CD14-positive monocyte (primary cell): ENCODE measurements at regions of chr7 and their contacts with region 1.

Region 1: GRCh38 chr7:131238347-131238931 is 89.2 kb upstream of the MKLN1 start:
- DNase-seq: peak; percentile 85 to 94 (median 92)
- H3K4me3 ChIP-seq: peak overlapping the region in 1 of 3 experiments; percentile 26
- H3K4me3 Mint-ChIP-seq: peak overlapping the region in 1 of 2 donors; percentile 48
- H3K27ac ChIP-seq: peak overlapping the region in 1 of 2 donors; percentile 82
- H3K27ac Mint-ChIP-seq: peak overlapping the region; percentile 71 to 96 (median 93)
- H3K4me1 ChIP-seq: peaks cover 30 to 47% of the 10 kb centered on the region in 2 donors
- H3K4me1 Mint-ChIP-seq: peaks cover 45% of the 10 kb centered on the region
- H3K27me3 ChIP-seq: no peaks in the 10 kb centered on the region
- H3K27me3 Mint-ChIP-seq: peaks cover 0 to 7% (median 2%) of the 10 kb centered on the region in 3 donors
- CTCF ChIP-seq: no peak

Region 2: DNA sequence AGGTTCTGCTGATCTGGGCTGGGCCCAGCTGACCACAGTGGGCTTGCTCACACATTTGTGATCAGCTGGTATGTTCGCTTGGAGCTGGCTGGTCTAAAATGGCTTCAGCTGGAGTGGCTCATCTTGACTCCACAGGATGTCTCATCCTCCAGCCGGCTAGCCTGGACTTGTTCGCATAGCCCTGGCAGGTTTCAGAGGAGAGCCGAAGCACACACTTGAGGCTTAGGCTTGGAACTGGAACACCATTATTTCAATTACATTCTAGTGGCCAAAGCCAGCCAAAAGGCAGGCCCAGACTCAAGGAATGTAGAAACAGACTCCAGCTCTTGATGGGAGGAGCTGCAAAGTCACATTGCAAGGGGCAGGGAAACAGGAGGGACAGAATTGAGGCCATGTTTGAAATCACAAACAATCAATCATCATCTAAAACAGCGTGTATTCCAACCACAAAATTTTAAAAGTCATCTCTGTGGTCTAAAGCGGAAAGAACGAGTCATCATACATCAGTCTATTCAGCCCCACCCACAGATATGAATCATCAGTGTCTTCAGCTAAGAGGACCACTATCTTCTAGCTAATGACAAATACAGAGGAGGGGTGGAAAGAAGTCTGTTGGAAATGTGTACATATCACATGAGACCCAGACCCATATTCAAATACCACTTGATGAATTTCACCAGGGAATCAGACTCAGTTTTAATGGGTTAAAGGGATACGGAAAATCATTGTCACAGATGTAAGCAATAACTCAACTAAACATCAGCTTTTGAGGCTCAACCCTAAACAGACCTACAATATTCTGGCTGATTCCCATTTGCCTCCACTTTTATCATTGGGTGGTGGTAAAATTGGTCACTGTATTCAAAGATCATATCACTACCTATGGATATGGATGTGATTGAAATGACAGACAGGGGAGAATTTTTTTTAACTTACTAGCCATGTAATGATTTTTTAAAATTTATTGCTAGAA is 49.8 kb before region 1 on chr7:
- intact Hi-C with region 1: loop called (anchors 2 to 10 kb)
- DNase-seq: peak; percentile 91 to 98 (median 96)
- H3K4me3 ChIP-seq: no peak overlapping the region
- H3K4me3 Mint-ChIP-seq: peak overlapping the region in 1 of 2 donors; percentile 62
- H3K27ac ChIP-seq: peak overlapping the region; percentile 62 to 85
- H3K27ac Mint-ChIP-seq: peak overlapping the region; percentile 89 to 96 (median 94)
- H3K4me1 ChIP-seq: peaks cover 18 to 35% of the 10 kb centered on the region in 2 donors
- H3K4me1 Mint-ChIP-seq: peaks cover 37% of the 10 kb centered on the region
- H3K27me3 ChIP-seq: peaks cover 11 to 24% of the 10 kb centered on the region in 2 donors
- H3K27me3 Mint-ChIP-seq: peaks cover 28 to 40% (median 33%) of the 10 kb centered on the region in 3 donors
- CTCF ChIP-seq: no peak